HepG2 (cell line): ENCODE measurements at regions of chr2 and their contacts with region 1.

Region 1: DNA sequence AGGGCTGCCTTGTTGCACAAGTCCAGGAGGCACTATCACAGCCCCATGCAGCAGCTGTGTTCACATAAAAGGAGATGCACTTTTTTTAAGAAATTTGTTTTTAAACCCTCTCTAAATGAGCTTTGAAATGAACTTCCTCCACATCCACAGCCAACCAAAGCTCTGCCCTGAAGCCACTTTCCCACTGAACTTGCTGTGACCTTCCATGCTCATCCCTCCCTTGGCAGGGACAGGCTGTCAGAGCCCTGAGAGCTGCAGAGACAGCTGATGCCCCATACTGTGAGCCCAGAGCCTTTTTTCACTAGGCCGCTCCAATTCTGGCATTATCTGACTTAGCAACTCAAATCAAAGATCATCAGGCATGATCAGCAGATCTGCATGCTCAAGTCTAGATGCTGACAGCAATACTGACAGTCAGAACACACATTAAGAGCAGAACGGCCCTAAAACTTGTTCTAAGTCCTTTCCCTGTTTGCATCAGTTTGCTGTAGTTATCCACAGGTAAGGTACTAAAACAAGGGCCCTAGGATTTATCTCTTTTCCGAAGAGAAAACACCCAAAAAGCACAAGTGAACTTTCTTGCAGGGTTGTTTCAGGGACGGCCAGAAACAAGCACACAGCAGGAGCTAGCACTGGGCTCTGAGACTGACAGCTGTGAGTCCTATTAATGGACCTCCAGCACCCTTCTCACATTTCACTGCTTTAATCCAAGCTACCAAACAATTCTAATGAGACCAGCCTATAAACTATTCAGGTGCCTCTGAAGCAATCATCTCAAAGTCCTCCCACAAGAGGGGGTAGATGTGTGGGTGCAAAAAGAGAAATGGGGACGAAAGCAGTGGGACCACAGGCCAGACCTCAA is 34.9 kb downstream of the RNU4ATAC start:
- DNase-seq: no peak
- ATAC-seq: no peak
- H3K4me3 ChIP-seq: no peak overlapping the region
- H3K27ac ChIP-seq: no peak overlapping the region
- H3K4me1 ChIP-seq: peaks cover 71% of the 10 kb centered on the region
- H3K27me3 ChIP-seq: no peaks in the 10 kb centered on the region
- CTCF ChIP-seq: no peak
- EP300 ChIP-seq: no peak
- POLR2A ChIP-seq: no peak
- RAD21 ChIP-seq: no peak

Region 2: GRCh38 chr2:121583555-121583954 is 17.9 kb after region 1 on chr2:
- CTCF ChIA-PET with region 1: no interaction called
- POLR2A ChIA-PET with region 1: no interaction called
- in situ Hi-C with region 1: no loop called
- intact Hi-C with region 1: loop called (anchors 1 kb)
- DNase-seq: no peak
- ATAC-seq: no peak
- H3K4me3 ChIP-seq: no peak overlapping the region
- H3K27ac ChIP-seq: no peak overlapping the region
- H3K4me1 ChIP-seq: peaks cover 27% of the 10 kb centered on the region
- H3K27me3 ChIP-seq: no peaks in the 10 kb centered on the region
- CTCF ChIP-seq: no peak
- EP300 ChIP-seq: no peak
- POLR2A ChIP-seq: no peak
- RAD21 ChIP-seq: no peak